ENCODE measurements at regions of chr14 and their contacts with region 1.

Region 1: DNA sequence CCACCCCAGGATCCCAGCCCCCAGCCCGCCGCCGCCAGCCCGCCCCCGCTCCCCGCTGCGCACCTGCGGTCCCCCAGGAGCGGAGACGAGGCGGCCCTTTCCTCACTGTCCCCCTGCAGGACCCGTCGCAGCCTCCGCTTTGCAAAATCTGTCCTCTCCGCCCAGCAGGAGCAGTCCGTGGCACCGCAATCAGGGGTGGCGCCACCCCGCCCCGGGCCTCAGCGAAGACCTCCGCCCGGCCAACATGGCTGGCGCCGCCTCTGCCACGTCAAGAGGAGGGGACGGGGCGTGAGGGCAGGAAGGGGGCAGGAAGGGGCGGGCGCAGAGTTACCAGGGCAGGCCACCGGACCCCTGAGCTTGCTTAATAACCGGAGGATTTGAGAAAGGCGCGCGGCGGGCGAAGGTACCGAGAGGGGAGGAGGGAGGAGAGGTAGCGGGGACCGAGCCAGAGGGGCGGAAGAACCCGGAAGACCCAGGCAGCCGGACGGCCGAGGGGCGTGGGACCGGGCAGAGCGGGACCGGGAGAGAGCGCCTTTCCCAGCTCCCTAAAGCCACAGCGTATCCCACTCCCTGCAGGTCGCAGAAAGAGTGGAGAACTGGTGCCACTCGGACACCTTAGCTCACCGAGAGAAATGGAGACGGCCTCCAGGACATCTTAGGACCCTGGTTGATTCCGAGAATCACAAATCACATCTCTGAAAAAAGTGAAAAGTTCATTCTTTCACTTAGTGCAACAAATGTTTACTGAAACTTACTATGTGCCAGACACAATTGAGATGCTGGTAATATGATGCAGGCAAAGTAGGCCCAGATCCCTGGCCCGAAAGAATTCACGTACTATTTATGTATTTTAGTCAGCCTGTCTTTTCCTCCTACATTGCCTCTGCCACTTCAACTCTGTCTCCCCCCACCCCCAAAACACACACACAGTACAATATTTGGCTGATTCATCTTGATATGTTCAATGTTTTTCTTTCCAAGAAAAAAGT is at the start of gene SEC23A:
- DNase-seq: peak; percentile 98
- H3K4me3 ChIP-seq: peak within 1 kb of the TSS; percentile 61 to 81 (median 74)
- H3K27ac ChIP-seq: peak within 1 kb of the TSS; percentile 86 to 97 (median 94)
- H3K4me1 ChIP-seq: peaks cover 0 to 58% (median 41%) of the 10 kb centered on the region in 6 donors
- H3K27me3 ChIP-seq: no peaks in the 10 kb centered on the region
- CTCF ChIP-seq: peak in 1 of 11 experiments; percentile 7
- POLR2A ChIP-seq: peak in 2 of 3 donors; percentile 63 to 84
- total RNA-seq, gene SEC23A: 50.0 to 87.5 (median 63.8) TPM

Region 2: DNA sequence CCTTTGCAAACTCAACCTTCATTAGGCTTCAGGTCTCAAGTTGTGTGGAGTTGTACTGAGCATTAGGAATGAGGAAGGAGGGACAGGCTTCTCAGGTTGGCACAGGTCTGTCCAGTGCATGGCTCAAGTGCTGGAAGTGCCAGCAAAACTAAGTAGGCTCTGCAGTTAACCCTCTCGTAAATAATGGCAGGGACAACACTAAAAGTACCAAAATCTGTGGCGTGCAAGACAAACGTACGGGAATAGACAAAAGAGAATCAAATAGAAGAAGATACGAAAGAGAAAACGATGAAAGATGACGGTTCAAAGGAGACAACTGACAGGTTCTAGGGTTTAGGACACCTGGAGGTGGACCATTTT is 66.3 kb after region 1 on chr14:
- intact Hi-C with region 1: no loop called
- DNase-seq: no peak
- H3K4me3 ChIP-seq: peak overlapping the region; percentile 57 to 83 (median 78)
- H3K27ac ChIP-seq: peak overlapping the region; percentile 94 to 99 (median 98)
- H3K4me1 ChIP-seq: peaks cover 24 to 70% (median 42%) of the 10 kb centered on the region in 6 donors
- H3K27me3 ChIP-seq: no peaks in the 10 kb centered on the region
- CTCF ChIP-seq: no peak
- POLR2A ChIP-seq: no peak

Region 3: DNA sequence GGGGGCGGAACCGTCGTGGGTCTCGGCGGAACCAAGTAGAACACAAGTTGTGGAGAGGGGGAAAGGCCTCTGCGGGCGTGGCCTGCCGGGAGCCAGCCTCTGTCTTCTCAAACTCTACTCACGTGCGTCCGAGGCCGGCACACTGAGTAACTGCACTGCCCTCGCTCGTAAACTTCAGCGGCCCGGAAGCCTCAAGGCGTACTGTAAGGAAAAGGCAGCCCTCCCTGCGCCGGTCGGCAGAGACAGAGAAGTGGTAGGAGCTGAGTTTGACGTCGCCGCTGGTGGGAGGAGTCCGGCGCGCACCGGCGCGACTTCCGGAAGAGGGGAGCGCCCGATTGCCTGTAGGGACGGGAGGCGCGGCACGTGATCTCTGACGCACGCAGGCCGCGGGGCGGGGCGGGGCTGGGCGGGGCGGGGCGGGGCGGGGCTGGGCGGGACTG is 328.9 kb after region 1 on chr14 and contains the start of gene FBXO33:
- intact Hi-C with region 1: loop called (anchors 10 kb)
- DNase-seq: peak; percentile 99
- H3K4me3 ChIP-seq: peak within 1 kb of the TSS; percentile 59 to 97 (median 87)
- H3K27ac ChIP-seq: peak within 1 kb of the TSS; percentile 97 to 100 (median 99)
- H3K4me1 ChIP-seq: peaks cover 28 to 52% (median 45%) of the 10 kb centered on the region in 6 donors
- H3K27me3 ChIP-seq: no peaks in the 10 kb centered on the region
- CTCF ChIP-seq: peak in 1 of 11 experiments; percentile 25
- POLR2A ChIP-seq: peak in 1 of 3 donors; percentile 50
- total RNA-seq, gene FBXO33: 11.2 to 24.1 (median 16.2) TPM

Region 4: GRCh38 chr14:39488600-39488999 is 385.3 kb after region 1 on chr14:
- intact Hi-C with region 1: no loop called
- DNase-seq: no peak
- H3K4me3 ChIP-seq: no peak overlapping the region
- H3K27ac ChIP-seq: no peak overlapping the region
- H3K4me1 ChIP-seq: peaks cover 0 to 6% (median 5%) of the 10 kb centered on the region in 6 donors
- H3K27me3 ChIP-seq: no peaks in the 10 kb centered on the region
- CTCF ChIP-seq: no peak
- POLR2A ChIP-seq: no peak